Breast epithelium (tissue), 4 donors: ENCODE measurements at regions of chr9 and their contacts with region 1.

Region 1: DNA sequence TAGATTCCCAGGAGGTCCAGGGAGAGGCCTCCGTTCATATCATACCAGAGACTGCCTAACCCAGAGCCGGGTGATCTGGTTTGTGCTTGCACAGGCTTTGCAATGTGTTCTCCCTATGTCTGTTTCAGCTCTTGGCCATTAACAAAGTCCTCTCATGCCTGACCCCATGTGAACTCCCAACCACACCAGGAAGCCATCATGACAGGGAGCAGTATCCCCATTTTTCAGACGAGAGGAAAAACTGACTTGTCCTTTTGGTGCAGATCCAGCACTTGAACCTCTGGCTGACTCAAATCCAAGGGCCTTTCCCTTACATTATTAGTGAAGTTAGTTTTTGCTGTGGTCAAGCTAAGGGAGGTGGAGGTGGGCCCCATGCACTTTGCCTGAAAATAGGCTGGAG is 58.4 kb downstream of the TEX10 start:
- DNase-seq: no peak
- H3K4me3 ChIP-seq: no peak overlapping the region
- H3K27ac ChIP-seq: no peak overlapping the region
- H3K4me1 ChIP-seq: no peaks in the 10 kb centered on the region
- H3K27me3 ChIP-seq: no peaks in the 10 kb centered on the region
- CTCF ChIP-seq: no peak
- POLR2A ChIP-seq: no peak

Region 2: GRCh38 chr9:99040911-99041582 is 1253.3 kb before region 1 on chr9:
- intact Hi-C with region 1: no loop called
- DNase-seq: no peak
- H3K4me3 ChIP-seq: no peak overlapping the region
- H3K27ac ChIP-seq: peak overlapping the region in 1 of 2 donors; percentile 48
- H3K4me1 ChIP-seq: no peaks in the 10 kb centered on the region
- H3K27me3 ChIP-seq: no peaks in the 10 kb centered on the region
- CTCF ChIP-seq: no peak
- POLR2A ChIP-seq: no peak

Region 3: GRCh38 chr9:100355561-100355960 is 61.2 kb after region 1 on chr9:
- intact Hi-C with region 1: loop called (anchors 2 kb)
- DNase-seq: no peak
- H3K4me3 ChIP-seq: no peak overlapping the region
- H3K27ac ChIP-seq: no peak overlapping the region
- H3K4me1 ChIP-seq: peaks cover 0 to under 1% of the 10 kb centered on the region in 2 donors
- H3K27me3 ChIP-seq: no peaks in the 10 kb centered on the region
- CTCF ChIP-seq: no peak
- POLR2A ChIP-seq: no peak

Region 4: DNA sequence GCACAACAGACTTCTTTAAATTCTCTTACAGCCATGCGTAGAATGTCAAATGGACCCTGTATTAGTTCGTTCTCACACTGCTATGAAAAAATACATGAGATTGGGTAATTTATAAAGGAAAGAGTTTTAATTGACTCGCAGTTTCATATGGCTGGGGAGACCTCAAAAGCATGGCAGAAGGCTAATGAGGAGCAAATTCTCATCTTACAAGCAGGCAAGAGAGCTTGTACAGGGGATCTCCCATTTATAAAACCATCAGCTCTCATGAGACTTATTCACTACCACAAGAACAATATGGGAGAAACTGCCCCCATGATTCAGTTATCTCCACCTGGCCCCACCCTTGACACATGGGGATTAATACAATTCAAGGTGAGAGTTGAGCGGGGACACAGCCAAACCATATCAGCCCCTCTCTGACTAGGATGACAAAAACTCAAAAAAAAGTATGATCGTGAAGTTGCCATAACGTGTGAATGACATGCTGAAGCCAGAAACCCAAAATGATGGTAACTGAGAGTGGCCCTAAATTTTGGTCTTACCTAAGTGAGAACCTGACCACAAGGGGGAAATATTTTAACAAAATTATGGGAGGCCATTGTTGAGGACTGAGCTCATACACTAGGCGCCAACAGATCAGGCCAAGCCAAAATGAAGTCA is 75.9 kb after region 1 on chr9:
- intact Hi-C with region 1: loop called (anchors 5 kb)
- DNase-seq: no peak
- H3K4me3 ChIP-seq: no peak overlapping the region
- H3K27ac ChIP-seq: no peak overlapping the region
- H3K4me1 ChIP-seq: no peaks in the 10 kb centered on the region
- H3K27me3 ChIP-seq: no peaks in the 10 kb centered on the region
- CTCF ChIP-seq: no peak
- POLR2A ChIP-seq: no peak